ENCODE measurements at regions of chr12 and their contacts with region 1.

Region 1: GRCh38 chr12:121214855-121215745 is 5.2 kb downstream of the P2RX4 start:
- DNase-seq: peak; percentile 49 to 54
- H3K4me3 ChIP-seq: no peak overlapping the region
- H3K4me3 Mint-ChIP-seq: no peak overlapping the region
- H3K27ac Mint-ChIP-seq: peak overlapping the region; percentile 53
- H3K4me1 ChIP-seq: peaks cover 34% of the 10 kb centered on the region
- H3K4me1 Mint-ChIP-seq: peaks cover 15% of the 10 kb centered on the region
- H3K27me3 ChIP-seq: no peaks in the 10 kb centered on the region
- H3K27me3 Mint-ChIP-seq: no peaks in the 10 kb centered on the region
- CTCF ChIP-seq: no peak

Region 2: DNA sequence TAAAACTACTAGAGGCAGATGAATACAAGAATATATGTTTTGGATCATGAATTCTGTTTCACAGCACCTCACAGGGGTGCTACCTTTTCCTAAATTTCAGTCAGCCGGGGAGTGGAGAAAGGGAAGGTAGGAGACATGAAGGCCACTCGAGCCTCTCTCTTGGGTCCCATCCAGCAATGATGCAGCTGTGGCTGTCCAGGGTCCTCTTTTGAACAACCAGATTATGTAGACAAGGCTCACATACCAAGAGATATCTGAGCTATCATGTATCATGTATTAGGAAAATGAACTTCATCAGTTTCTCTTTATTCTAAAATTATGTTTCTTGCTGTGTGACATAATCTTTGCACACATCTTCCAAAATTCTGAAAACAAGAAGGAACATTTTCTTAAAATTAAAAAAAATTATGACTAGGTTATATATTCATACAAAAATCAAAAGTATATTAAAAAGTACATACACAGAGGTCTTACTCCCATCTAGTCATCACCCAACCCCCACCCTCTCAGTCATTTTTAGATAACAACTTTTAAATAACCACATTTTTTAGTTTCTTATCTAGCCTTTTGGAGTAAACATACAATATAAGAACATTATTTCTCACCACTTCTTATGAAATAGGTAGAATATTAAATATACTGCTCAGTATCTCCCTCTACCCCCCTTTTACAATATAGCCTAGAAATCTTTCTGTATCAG is 400.7 kb before region 1 on chr12:
- CTCF ChIA-PET with region 1: no interaction called
- POLR2A ChIA-PET with region 1: interaction called, 10 read pairs
- intact Hi-C with region 1: no loop called
- DNase-seq: no peak
- H3K4me3 ChIP-seq: no peak overlapping the region
- H3K4me3 Mint-ChIP-seq: no peak overlapping the region
- H3K27ac Mint-ChIP-seq: no peak overlapping the region
- H3K4me1 ChIP-seq: peaks cover 13% of the 10 kb centered on the region
- H3K4me1 Mint-ChIP-seq: peaks cover 21% of the 10 kb centered on the region
- H3K27me3 ChIP-seq: no peaks in the 10 kb centered on the region
- H3K27me3 Mint-ChIP-seq: no peaks in the 10 kb centered on the region
- CTCF ChIP-seq: no peak

Measured in Caco-2 (cell line).